WTC11 (cell line): ENCODE measurements at regions of chr11 and their contacts with region 1.

Region 1: DNA sequence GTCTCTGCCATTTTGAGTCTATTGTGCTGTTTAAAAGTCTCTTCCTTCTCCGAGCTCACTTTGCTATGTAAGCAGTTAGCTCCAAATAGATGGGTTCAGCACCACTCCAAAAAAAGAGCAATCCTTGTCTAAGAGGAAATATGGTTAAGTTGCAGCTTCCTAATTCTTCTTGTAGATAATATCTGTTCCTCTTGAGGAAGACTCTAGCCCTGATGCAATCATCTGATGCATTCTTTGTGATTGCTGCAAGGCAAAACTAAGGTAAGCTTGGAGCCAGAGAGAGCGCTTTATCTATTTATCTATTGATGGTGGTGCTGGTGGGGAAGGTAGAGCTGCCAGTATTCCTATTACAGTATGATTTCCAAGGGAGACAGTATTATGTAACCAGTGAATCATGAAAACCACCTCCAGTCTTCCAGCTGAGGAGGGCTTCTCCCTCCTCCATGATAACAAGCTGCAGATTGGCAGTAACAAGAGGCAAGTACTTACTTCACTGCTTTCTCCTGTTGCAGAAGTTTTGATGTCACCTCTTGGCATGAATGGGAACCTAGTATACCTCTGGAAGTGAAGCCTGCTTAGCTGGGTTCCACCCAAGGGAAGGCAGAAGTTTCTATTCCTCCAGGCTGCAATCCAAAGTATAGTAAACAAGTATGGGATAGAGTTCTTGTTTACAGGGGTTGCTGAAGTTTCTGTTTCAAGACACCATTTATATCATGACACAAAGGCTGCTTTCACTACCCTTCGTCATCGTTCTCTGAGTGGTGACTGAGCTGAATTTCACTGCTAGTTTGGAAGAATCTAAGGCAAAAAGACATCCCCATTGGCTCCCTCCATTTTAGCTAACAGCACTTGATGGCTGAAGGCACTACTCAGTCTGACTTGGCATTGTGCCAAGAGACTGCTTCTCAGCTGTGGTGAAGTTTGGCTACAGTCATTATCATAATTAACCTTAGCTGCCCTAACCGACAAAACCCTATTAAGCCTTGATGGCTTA is 49.7 kb downstream of the FDX1 start:
- DNase-seq: no peak
- ATAC-seq: no peak
- H3K4me3 Mint-ChIP-seq: no peak overlapping the region
- H3K27ac Mint-ChIP-seq: no peak overlapping the region
- H3K4me1 Mint-ChIP-seq: peaks cover 17% of the 10 kb centered on the region
- H3K27me3 Mint-ChIP-seq: no peaks in the 10 kb centered on the region
- CTCF ChIP-seq: no peak

Region 2: GRCh38 chr11:110463153-110463552 is 16.3 kb before region 1 on chr11:
- CTCF ChIA-PET with region 1: interaction called, 11 read pairs
- POLR2A ChIA-PET with region 1: no interaction called
- DNase-seq: peak; percentile 70
- ATAC-seq: peak; percentile 95
- H3K4me3 Mint-ChIP-seq: no peak overlapping the region
- H3K27ac Mint-ChIP-seq: no peak overlapping the region
- H3K4me1 Mint-ChIP-seq: no peaks in the 10 kb centered on the region
- H3K27me3 Mint-ChIP-seq: no peaks in the 10 kb centered on the region
- CTCF ChIP-seq: peak; percentile 25; the same call in 1 of the 2 replicates

Region 3: DNA sequence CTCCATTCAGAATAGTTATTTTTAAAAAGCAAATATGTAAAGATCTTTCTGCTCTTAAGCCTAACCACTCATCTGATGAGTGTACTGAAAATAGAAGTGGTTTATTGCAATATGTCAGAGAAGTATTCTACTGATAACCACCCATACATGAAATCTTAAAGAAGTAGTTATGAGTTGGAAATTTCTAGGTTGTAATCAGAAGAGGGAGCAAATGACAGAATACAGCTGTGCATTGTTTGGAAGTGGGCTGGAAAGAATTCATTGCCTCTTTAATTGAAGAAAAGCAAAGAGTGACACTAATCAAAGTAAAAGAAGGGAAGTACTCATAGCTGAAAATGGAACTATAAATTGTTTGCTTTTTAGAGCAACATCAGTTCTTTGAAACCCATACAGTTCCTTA is 10.3 kb before region 1 on chr11:
- CTCF ChIA-PET with region 1: interaction called, 10 read pairs
- POLR2A ChIA-PET with region 1: no interaction called
- DNase-seq: no peak
- ATAC-seq: no peak
- H3K4me3 Mint-ChIP-seq: no peak overlapping the region
- H3K27ac Mint-ChIP-seq: no peak overlapping the region
- H3K4me1 Mint-ChIP-seq: peaks cover 8% of the 10 kb centered on the region
- H3K27me3 Mint-ChIP-seq: no peaks in the 10 kb centered on the region
- CTCF ChIP-seq: no peak

Region 4: GRCh38 chr11:110490886-110491285 is 11.5 kb after region 1 on chr11:
- CTCF ChIA-PET with region 1: interaction called, 41 read pairs
- POLR2A ChIA-PET with region 1: no interaction called
- DNase-seq: no peak
- ATAC-seq: no peak
- H3K4me3 Mint-ChIP-seq: no peak overlapping the region
- H3K27ac Mint-ChIP-seq: no peak overlapping the region
- H3K4me1 Mint-ChIP-seq: peaks cover 22% of the 10 kb centered on the region
- H3K27me3 Mint-ChIP-seq: no peaks in the 10 kb centered on the region
- CTCF ChIP-seq: no peak

Region 5: DNA sequence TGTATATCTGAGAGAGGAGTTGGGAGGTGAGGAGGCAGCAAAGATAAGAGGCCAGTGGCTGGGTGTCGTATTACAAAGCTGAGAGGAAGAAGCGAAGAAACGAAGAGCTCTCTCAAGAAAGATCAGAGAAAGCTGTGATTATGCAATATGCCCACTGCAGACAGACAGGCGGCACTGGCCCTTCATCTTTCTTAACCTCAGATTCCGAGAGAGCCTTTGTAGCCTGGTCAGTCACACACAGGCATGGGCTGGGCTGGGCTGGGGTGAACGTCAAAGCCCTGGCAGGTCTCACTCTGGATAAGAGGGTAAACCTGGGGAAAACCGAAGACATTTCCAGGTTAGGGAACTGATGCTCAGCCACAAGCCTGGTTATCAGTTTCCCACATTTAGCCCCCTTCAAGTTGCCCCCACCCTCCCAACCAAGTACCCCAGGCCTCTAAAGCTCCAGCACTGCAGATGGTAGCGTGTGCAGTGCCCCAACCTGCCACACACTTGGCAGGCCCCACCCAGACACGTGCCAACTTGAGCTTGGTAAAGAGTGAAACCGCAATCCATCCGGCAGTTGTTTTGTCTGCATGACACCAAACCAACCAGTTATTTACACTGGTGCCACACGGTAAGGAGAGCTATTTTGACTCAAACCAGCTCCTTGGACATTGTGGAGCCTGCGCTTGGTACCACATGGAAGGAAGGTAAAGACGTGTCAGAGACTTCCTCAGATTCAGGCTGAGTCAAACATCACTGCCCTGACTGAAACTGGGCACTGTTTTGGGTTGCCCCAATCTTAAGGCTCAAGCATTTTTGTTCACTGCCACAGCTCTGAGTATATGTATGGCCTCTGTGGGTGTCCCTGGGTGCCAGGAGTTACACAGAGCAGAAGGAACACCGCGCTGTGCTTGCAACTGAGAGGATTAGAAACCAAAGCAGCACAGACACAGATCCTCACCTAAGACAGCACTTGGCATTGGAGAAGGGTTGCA is 86.2 kb after region 1 on chr11:
- CTCF ChIA-PET with region 1: interaction called, 13 read pairs
- POLR2A ChIA-PET with region 1: no interaction called
- DNase-seq: no peak
- ATAC-seq: peak; percentile 60
- H3K4me3 Mint-ChIP-seq: peak overlapping the region; percentile 31
- H3K27ac Mint-ChIP-seq: peak overlapping the region; percentile 90
- H3K4me1 Mint-ChIP-seq: peaks cover 24% of the 10 kb centered on the region
- H3K27me3 Mint-ChIP-seq: no peaks in the 10 kb centered on the region
- CTCF ChIP-seq: no peak

Region 6: GRCh38 chr11:110598725-110599124 is 119.3 kb after region 1 on chr11:
- CTCF ChIA-PET with region 1: no interaction called
- POLR2A ChIA-PET with region 1: no interaction called
- DNase-seq: no peak
- ATAC-seq: no peak
- H3K4me3 Mint-ChIP-seq: no peak overlapping the region
- H3K27ac Mint-ChIP-seq: no peak overlapping the region
- H3K4me1 Mint-ChIP-seq: no peaks in the 10 kb centered on the region
- H3K27me3 Mint-ChIP-seq: no peaks in the 10 kb centered on the region
- CTCF ChIP-seq: no peak